Activated naive CD4-positive, alpha-beta T cell treated with anti-CD3 and anti-CD28 coated beads for 36 hours (primary cell): ENCODE measurements at regions of chr9 and their contacts with region 1.

Region 1: GRCh38 chr9:125558453-125559092 is 148.4 kb downstream of the MAPKAP1 start:
- DNase-seq: peak; percentile 81
- H3K4me3 Mint-ChIP-seq: no peak overlapping the region
- H3K27ac Mint-ChIP-seq: no peak overlapping the region
- H3K4me1 Mint-ChIP-seq: peaks cover 11% of the 10 kb centered on the region
- H3K27me3 Mint-ChIP-seq: no peaks in the 10 kb centered on the region

Region 2: DNA sequence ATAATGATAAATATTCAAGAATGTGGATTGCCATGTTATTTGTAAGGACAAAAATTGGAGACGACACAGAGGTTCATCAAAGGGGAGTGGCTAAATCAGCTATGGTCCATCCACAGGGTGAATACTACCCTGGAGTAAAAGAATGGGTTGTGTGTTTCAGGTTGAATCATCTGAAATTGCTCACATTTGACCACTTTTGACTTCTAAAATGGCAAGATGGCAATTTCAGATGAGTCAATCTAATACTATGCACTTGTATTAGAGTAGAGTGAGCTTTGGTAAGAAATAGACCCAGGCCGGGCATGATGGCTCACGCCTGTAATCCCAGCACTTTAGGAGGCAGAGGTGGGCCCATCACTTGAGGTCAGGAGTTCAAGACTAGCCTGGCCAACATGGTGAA is 165.1 kb before region 1 on chr9:
- CTCF ChIA-PET with region 1: no interaction called
- intact Hi-C with region 1: no loop called
- DNase-seq: no peak
- H3K4me3 Mint-ChIP-seq: no peak overlapping the region
- H3K27ac Mint-ChIP-seq: no peak overlapping the region
- H3K4me1 Mint-ChIP-seq: no peaks in the 10 kb centered on the region
- H3K27me3 Mint-ChIP-seq: no peaks in the 10 kb centered on the region

Region 3: GRCh38 chr9:125532412-125532811 is 26.2 kb before region 1 on chr9:
- CTCF ChIA-PET with region 1: interaction called, 13 read pairs
- intact Hi-C with region 1: no loop called
- DNase-seq: no peak
- H3K4me3 Mint-ChIP-seq: no peak overlapping the region
- H3K27ac Mint-ChIP-seq: no peak overlapping the region
- H3K4me1 Mint-ChIP-seq: peaks cover 32% of the 10 kb centered on the region
- H3K27me3 Mint-ChIP-seq: no peaks in the 10 kb centered on the region

Region 4: GRCh38 chr9:125568621-125569020 is 10.0 kb after region 1 on chr9:
- CTCF ChIA-PET with region 1: interaction called, 12 read pairs
- intact Hi-C with region 1: no loop called
- DNase-seq: no peak
- H3K4me3 Mint-ChIP-seq: no peak overlapping the region
- H3K27ac Mint-ChIP-seq: no peak overlapping the region
- H3K4me1 Mint-ChIP-seq: peaks cover 4% of the 10 kb centered on the region
- H3K27me3 Mint-ChIP-seq: no peaks in the 10 kb centered on the region

Region 5: GRCh38 chr9:125617087-125617486 is 58.5 kb after region 1 on chr9:
- CTCF ChIA-PET with region 1: no interaction called
- intact Hi-C with region 1: no loop called
- DNase-seq: no peak
- H3K4me3 Mint-ChIP-seq: no peak overlapping the region
- H3K27ac Mint-ChIP-seq: no peak overlapping the region
- H3K4me1 Mint-ChIP-seq: peaks cover 10% of the 10 kb centered on the region
- H3K27me3 Mint-ChIP-seq: no peaks in the 10 kb centered on the region